B cell (primary cell): ENCODE measurements at regions of chr7 and their contacts with region 1.

Region 1: GRCh38 chr7:8190119-8190895 is 71.7 kb downstream of the ICA1 start:
- DNase-seq: peak; percentile 78
- ATAC-seq: peak; percentile 73
- H3K4me3 ChIP-seq: no peak overlapping the region
- H3K4me3 Mint-ChIP-seq: no peak overlapping the region
- H3K27ac ChIP-seq: no peak overlapping the region
- H3K27ac Mint-ChIP-seq: no peak overlapping the region
- H3K4me1 ChIP-seq: peaks cover 17 to 18% of the 10 kb centered on the region in 2 donors
- H3K4me1 Mint-ChIP-seq: peaks cover 18% of the 10 kb centered on the region
- H3K27me3 ChIP-seq: no peaks in the 10 kb centered on the region
- H3K27me3 Mint-ChIP-seq: no peaks in the 10 kb centered on the region
- CTCF ChIP-seq: peak; percentile 91

Region 2: DNA sequence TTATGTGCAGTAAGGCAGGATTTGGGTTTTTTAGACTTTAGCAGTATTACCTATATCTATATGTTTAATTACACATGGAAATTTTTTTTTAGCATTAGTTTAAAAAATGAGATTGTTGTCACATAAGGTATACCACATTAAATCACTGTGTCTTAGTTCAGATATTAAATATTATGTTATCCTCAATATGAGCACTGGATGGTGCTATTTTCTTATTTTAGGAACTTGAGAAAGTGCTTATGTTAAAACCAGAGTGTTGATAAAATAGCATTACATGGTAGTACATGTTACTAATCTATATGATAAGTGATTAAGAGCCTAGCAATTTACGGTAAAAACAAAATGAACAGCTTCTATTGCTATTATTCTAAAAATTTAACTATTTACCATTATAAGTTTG is 594.9 kb before region 1 on chr7:
- CTCF ChIA-PET with region 1: interaction called, 53 read pairs
- POLR2A ChIA-PET with region 1: no interaction called
- intact Hi-C with region 1: loop called (anchors 1 kb)
- DNase-seq: peak; percentile 58
- ATAC-seq: peak; percentile 33
- H3K4me3 ChIP-seq: no peak overlapping the region
- H3K4me3 Mint-ChIP-seq: no peak overlapping the region
- H3K27ac ChIP-seq: no peak overlapping the region
- H3K27ac Mint-ChIP-seq: no peak overlapping the region
- H3K4me1 ChIP-seq: no peaks in the 10 kb centered on the region
- H3K4me1 Mint-ChIP-seq: no peaks in the 10 kb centered on the region
- H3K27me3 ChIP-seq: no peaks in the 10 kb centered on the region
- H3K27me3 Mint-ChIP-seq: no peaks in the 10 kb centered on the region
- CTCF ChIP-seq: peak; percentile 75

Region 3: DNA sequence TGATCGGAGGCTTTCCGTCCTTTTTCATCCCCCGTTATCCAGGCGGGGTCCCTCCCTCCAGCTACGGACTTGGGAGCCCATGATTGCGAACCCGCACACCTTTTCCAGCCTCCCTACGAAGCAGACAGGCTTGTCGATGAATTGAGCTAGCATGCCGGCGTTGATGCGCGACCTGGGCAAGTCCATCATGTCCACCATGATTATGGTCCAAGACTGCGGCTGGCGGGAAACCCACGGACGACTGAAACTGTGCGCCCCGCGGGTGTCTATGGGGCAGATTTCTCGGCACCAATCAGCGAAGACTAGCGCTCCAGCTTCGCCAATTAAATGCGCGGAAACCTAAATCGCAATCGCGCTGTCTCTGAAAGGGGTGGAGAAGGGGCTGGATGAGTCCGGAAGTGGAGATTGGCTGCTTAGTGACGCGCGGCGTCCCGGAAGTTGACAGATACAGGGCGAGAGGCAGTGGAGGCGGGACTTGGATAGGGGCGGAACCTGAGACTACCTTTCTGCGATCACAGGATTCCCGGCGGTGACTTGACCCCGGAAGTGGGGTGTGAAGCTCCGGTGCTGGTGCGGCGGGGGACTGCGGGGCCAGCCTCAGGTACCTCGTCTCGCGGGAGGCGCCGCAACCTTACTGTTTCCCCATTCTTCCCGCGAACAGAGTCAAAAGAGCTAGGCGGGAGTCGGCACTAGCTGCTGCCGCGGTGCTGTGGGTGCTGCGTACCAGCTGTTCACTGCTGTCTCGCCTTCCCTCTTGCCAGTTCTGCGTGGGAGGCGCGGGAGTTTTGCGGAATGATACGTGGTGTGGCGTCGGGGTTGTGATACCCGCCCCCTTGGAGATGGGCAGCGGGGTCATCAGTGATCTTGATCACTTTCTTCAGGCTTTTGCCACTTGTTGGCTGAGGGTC is 549.8 kb before region 1 on chr7 and contains the start of gene UMAD1:
- CTCF ChIA-PET with region 1: interaction called, 22 read pairs
- POLR2A ChIA-PET with region 1: no interaction called
- intact Hi-C with region 1: no loop called
- DNase-seq: peak; percentile 99
- ATAC-seq: peak; percentile 91
- H3K4me3 ChIP-seq: peak within 1 kb of the TSS; percentile 83 to 99 (median 93)
- H3K4me3 Mint-ChIP-seq: peak within 1 kb of the TSS; percentile 87
- H3K27ac ChIP-seq: peak within 1 kb of the TSS; percentile 98 to 99
- H3K27ac Mint-ChIP-seq: peak within 1 kb of the TSS; percentile 98
- H3K4me1 ChIP-seq: peaks cover 15 to 17% of the 10 kb centered on the region in 2 donors
- H3K4me1 Mint-ChIP-seq: peaks cover 45% of the 10 kb centered on the region
- H3K27me3 ChIP-seq: no peaks in the 10 kb centered on the region
- H3K27me3 Mint-ChIP-seq: no peaks in the 10 kb centered on the region
- CTCF ChIP-seq: no peak
- total RNA-seq, gene UMAD1: 25.9 and 27.3 TPM in 2 replicates

Region 4: DNA sequence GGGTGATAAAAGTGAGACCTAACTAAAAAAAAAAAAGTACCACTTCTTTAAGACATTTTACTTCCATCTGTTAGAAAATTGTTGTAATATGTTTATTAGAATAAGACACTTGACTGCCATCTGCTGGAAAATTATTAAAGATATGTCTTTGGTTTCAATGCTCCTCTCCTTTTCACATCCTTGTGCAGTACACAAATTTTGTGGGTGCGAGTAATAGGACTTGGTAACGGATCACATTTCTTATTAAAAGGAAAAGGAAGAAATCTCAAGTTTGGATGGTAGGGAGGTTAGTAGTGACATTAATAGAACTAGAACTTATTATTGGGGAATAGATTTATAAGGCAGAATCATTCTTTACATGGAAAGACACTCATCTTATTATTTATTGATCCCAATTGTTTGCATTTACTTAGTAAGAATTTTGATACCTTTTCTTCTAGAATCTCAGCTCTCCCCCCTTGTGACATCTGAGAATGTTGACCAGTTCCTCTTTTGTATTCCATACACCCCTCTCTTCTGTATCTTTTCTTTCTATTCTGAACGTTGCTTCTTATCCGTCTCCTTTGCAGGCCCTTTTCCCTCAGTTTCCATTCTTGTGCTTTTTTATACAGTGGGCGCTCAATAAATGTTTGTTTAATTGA is 428.8 kb before region 1 on chr7:
- CTCF ChIA-PET with region 1: interaction called, 14 read pairs
- POLR2A ChIA-PET with region 1: no interaction called
- intact Hi-C with region 1: loop called (anchors 5 kb)
- DNase-seq: peak; percentile 63
- ATAC-seq: peak; percentile 64
- H3K4me3 ChIP-seq: peak overlapping the region; percentile 46 to 73 (median 60)
- H3K4me3 Mint-ChIP-seq: peak overlapping the region; percentile 91
- H3K27ac ChIP-seq: peak overlapping the region; percentile 47 to 75
- H3K27ac Mint-ChIP-seq: peak overlapping the region; percentile 89
- H3K4me1 ChIP-seq: peaks cover 17 to 22% of the 10 kb centered on the region in 2 donors
- H3K4me1 Mint-ChIP-seq: peaks cover 35% of the 10 kb centered on the region
- H3K27me3 ChIP-seq: no peaks in the 10 kb centered on the region
- H3K27me3 Mint-ChIP-seq: no peaks in the 10 kb centered on the region
- CTCF ChIP-seq: peak; percentile 68

Region 5: GRCh38 chr7:8035647-8036518 is 154.4 kb before region 1 on chr7:
- CTCF ChIA-PET with region 1: interaction called, 18 read pairs
- POLR2A ChIA-PET with region 1: no interaction called
- intact Hi-C with region 1: loop called (anchors 10 kb)
- DNase-seq: peak; percentile 54
- ATAC-seq: peak; percentile 78
- H3K4me3 ChIP-seq: no peak overlapping the region
- H3K4me3 Mint-ChIP-seq: no peak overlapping the region
- H3K27ac ChIP-seq: peak overlapping the region in 1 of 2 donors; percentile 20
- H3K27ac Mint-ChIP-seq: peak overlapping the region; percentile 77
- H3K4me1 ChIP-seq: peaks cover 3 to 5% of the 10 kb centered on the region in 2 donors
- H3K4me1 Mint-ChIP-seq: peaks cover 14% of the 10 kb centered on the region
- H3K27me3 ChIP-seq: no peaks in the 10 kb centered on the region
- H3K27me3 Mint-ChIP-seq: no peaks in the 10 kb centered on the region
- CTCF ChIP-seq: peak; percentile 75

Region 6: GRCh38 chr7:8125680-8126444 is 64.4 kb before region 1 on chr7:
- CTCF ChIA-PET with region 1: interaction called, 17 read pairs
- POLR2A ChIA-PET with region 1: no interaction called
- intact Hi-C with region 1: no loop called
- DNase-seq: peak; percentile 73
- ATAC-seq: peak; percentile 92
- H3K4me3 ChIP-seq: peak overlapping the region in 2 of 5 experiments; percentile 16 to 37
- H3K4me3 Mint-ChIP-seq: peak overlapping the region; percentile 69
- H3K27ac ChIP-seq: peak overlapping the region; percentile 58 to 74
- H3K27ac Mint-ChIP-seq: peak overlapping the region; percentile 95
- H3K4me1 ChIP-seq: peaks cover 18 to 33% of the 10 kb centered on the region in 2 donors
- H3K4me1 Mint-ChIP-seq: peaks cover 57% of the 10 kb centered on the region
- H3K27me3 ChIP-seq: no peaks in the 10 kb centered on the region
- H3K27me3 Mint-ChIP-seq: no peaks in the 10 kb centered on the region
- CTCF ChIP-seq: no peak

Region 7: GRCh38 chr7:8176370-8177081 is 13.8 kb before region 1 on chr7:
- CTCF ChIA-PET with region 1: interaction called, 57 read pairs
- POLR2A ChIA-PET with region 1: interaction called, 5 read pairs
- intact Hi-C with region 1: loop called (anchors 1 kb)
- DNase-seq: peak; percentile 79
- ATAC-seq: peak; percentile 86
- H3K4me3 ChIP-seq: peak overlapping the region in 4 of 5 experiments; percentile 3 to 55 (median 22)
- H3K4me3 Mint-ChIP-seq: peak overlapping the region; percentile 86
- H3K27ac ChIP-seq: peak overlapping the region; percentile 82 to 91
- H3K27ac Mint-ChIP-seq: peak overlapping the region; percentile 97
- H3K4me1 ChIP-seq: peaks cover 43 to 49% of the 10 kb centered on the region in 2 donors
- H3K4me1 Mint-ChIP-seq: peaks cover 56% of the 10 kb centered on the region
- H3K27me3 ChIP-seq: no peaks in the 10 kb centered on the region
- H3K27me3 Mint-ChIP-seq: no peaks in the 10 kb centered on the region
- CTCF ChIP-seq: no peak

Region 8: DNA sequence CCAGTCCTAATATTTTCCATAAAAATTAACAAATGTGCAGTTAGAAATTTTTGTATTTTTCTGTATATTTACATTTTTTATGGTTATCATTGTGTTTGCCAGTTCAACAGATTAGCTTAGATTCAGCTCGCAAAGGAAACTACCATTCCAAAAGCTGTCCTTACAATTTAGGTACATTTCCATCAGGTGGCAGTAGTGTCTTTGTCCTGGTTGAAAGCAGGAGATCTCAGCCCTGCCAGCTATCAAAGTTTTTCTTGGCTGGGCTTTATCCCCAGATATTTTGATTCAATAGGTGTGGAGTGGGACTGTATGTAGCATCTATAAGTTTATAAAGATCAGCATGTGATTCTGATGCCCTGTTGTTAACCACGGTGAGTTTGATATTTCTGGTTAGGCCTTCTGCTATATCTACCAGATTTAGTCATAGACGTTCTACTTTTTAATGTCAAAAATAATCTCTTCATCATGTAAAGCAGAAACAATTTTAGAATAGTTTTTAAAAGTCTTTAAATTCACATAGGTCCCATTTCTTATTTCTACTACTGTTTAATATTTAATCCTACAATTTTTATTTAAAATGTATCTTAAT is 87.2 kb after region 1 on chr7:
- CTCF ChIA-PET with region 1: no interaction called
- POLR2A ChIA-PET with region 1: no interaction called
- intact Hi-C with region 1: no loop called
- DNase-seq: no peak
- ATAC-seq: no peak
- H3K4me3 ChIP-seq: no peak overlapping the region
- H3K4me3 Mint-ChIP-seq: no peak overlapping the region
- H3K27ac ChIP-seq: no peak overlapping the region
- H3K27ac Mint-ChIP-seq: no peak overlapping the region
- H3K4me1 ChIP-seq: no peaks in the 10 kb centered on the region
- H3K4me1 Mint-ChIP-seq: no peaks in the 10 kb centered on the region
- H3K27me3 ChIP-seq: no peaks in the 10 kb centered on the region
- H3K27me3 Mint-ChIP-seq: peaks cover 31% of the 10 kb centered on the region
- CTCF ChIP-seq: no peak

Region 9: GRCh38 chr7:8353991-8354390 is 163.7 kb after region 1 on chr7:
- CTCF ChIA-PET with region 1: no interaction called
- POLR2A ChIA-PET with region 1: no interaction called
- intact Hi-C with region 1: no loop called
- DNase-seq: no peak
- ATAC-seq: no peak
- H3K4me3 ChIP-seq: no peak overlapping the region
- H3K4me3 Mint-ChIP-seq: no peak overlapping the region
- H3K27ac ChIP-seq: no peak overlapping the region
- H3K27ac Mint-ChIP-seq: no peak overlapping the region
- H3K4me1 ChIP-seq: no peaks in the 10 kb centered on the region
- H3K4me1 Mint-ChIP-seq: no peaks in the 10 kb centered on the region
- H3K27me3 ChIP-seq: no peaks in the 10 kb centered on the region
- H3K27me3 Mint-ChIP-seq: peaks cover 24% of the 10 kb centered on the region
- CTCF ChIP-seq: no peak

Region 10: GRCh38 chr7:8379264-8379663 is 189.0 kb after region 1 on chr7:
- CTCF ChIA-PET with region 1: no interaction called
- POLR2A ChIA-PET with region 1: no interaction called
- intact Hi-C with region 1: no loop called
- DNase-seq: no peak
- ATAC-seq: no peak
- H3K4me3 ChIP-seq: no peak overlapping the region
- H3K4me3 Mint-ChIP-seq: no peak overlapping the region
- H3K27ac ChIP-seq: no peak overlapping the region
- H3K27ac Mint-ChIP-seq: no peak overlapping the region
- H3K4me1 ChIP-seq: no peaks in the 10 kb centered on the region
- H3K4me1 Mint-ChIP-seq: no peaks in the 10 kb centered on the region
- H3K27me3 ChIP-seq: peaks cover 0 to 4% (median 2%) of the 10 kb centered on the region in 4 experiments
- H3K27me3 Mint-ChIP-seq: peaks cover 16% of the 10 kb centered on the region
- CTCF ChIP-seq: no peak